ENCODE measurements at regions of chr19 and their contacts with region 1.

Region 1: GRCh38 chr19:55088543-55089341 is 13.1 kb downstream of the EPS8L1 start:
- DNase-seq: peak; percentile 77 to 84
- ATAC-seq: peak in 2 of 3 donors; percentile 51 to 60
- H3K4me3 ChIP-seq: no peak overlapping the region
- H3K4me3 Mint-ChIP-seq: peak overlapping the region; percentile 89
- H3K27ac ChIP-seq: no peak overlapping the region
- H3K27ac Mint-ChIP-seq: peak overlapping the region; percentile 46 to 81
- H3K4me1 ChIP-seq: peaks cover 25% of the 10 kb centered on the region
- H3K4me1 Mint-ChIP-seq: peaks cover 20 to 31% of the 10 kb centered on the region in 2 donors
- H3K27me3 ChIP-seq: peaks cover 21% of the 10 kb centered on the region
- H3K27me3 Mint-ChIP-seq: peaks cover 20 to 34% of the 10 kb centered on the region in 2 donors
- CTCF ChIP-seq: peak; percentile 86

Region 2: DNA sequence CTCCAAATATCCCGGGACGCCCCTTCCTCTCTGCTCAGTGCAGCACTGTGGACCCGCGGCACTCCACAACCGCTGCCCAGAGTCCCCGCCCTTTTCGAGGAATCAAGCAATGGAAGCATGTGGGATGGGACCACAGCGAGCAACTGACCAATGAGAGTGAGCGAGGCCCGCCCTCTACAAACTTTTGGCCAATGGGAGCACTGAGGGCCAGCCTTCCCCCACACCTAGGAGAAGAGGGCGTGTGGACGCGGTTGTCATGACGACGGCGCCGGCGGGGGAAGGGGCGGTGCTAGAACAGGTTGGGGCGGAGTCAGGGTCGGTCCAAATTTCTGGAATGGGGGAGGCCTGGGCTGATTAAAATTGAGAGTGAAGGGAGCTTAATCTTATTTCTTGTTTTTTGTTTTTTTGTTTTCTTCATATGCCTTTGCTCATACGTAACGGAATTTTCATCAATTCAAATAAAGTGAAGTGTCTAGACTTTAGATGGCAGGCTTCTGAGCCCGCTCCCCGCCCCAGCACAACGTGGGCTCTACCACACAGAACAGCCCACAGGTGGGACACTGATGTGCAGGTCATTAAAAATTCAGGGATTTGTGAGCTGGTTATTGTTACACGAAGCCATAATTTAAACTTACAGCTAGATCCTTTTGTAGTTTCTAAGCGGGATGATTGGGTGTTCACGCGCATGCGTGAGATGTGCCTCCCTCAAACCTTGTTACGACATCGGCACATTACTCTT is 78.0 kb after region 1 on chr19 and contains the start of gene DNAAF3:
- intact Hi-C with region 1: loop called (anchors 10 kb)
- DNase-seq: peak; percentile 45 to 80
- ATAC-seq: peak; percentile 83 to 89 (median 85)
- H3K4me3 ChIP-seq: no peak within 1 kb of the TSS
- H3K4me3 Mint-ChIP-seq: peak within 1 kb of the TSS; percentile 47
- H3K27ac ChIP-seq: no peak within 1 kb of the TSS
- H3K27ac Mint-ChIP-seq: peak within 1 kb of the TSS; percentile 16 to 83
- H3K4me1 ChIP-seq: peaks cover 16% of the 10 kb centered on the region
- H3K4me1 Mint-ChIP-seq: peaks cover 13 to 14% of the 10 kb centered on the region in 2 donors
- H3K27me3 ChIP-seq: peaks cover 31% of the 10 kb centered on the region
- H3K27me3 Mint-ChIP-seq: peaks cover 55 to 64% of the 10 kb centered on the region in 2 donors
- CTCF ChIP-seq: no peak
- total RNA-seq, gene DNAAF3: not detected

Region 3: DNA sequence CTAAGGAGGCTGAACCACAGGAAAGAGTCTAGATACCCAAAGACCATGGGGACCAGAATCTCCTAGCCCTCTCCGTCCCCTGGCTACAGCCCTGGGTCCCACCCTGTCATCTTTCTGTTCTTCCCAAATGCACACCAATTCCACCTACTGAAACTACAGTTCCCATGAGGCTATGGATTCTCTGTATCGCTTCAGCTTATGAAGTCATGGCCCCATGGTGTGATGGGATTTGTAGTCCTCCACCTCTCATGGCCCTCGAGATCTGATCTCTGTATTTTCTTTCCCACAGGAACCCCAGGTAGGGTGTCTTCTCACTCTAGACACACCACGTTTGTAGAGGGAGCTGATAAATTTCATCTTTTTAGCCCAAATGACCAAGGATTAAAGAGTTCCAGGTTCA is 108.8 kb after region 1 on chr19:
- intact Hi-C with region 1: no loop called
- DNase-seq: peak in 1 of 2 donors; percentile 30
- ATAC-seq: peak in 1 of 3 donors; percentile 55
- H3K4me3 ChIP-seq: no peak overlapping the region
- H3K4me3 Mint-ChIP-seq: no peak overlapping the region
- H3K27ac ChIP-seq: no peak overlapping the region
- H3K27ac Mint-ChIP-seq: no peak overlapping the region
- H3K4me1 ChIP-seq: no peaks in the 10 kb centered on the region
- H3K4me1 Mint-ChIP-seq: no peaks in the 10 kb centered on the region
- H3K27me3 ChIP-seq: no peaks in the 10 kb centered on the region
- H3K27me3 Mint-ChIP-seq: peaks cover 0 to 15% of the 10 kb centered on the region in 2 donors
- CTCF ChIP-seq: no peak

Region 4: DNA sequence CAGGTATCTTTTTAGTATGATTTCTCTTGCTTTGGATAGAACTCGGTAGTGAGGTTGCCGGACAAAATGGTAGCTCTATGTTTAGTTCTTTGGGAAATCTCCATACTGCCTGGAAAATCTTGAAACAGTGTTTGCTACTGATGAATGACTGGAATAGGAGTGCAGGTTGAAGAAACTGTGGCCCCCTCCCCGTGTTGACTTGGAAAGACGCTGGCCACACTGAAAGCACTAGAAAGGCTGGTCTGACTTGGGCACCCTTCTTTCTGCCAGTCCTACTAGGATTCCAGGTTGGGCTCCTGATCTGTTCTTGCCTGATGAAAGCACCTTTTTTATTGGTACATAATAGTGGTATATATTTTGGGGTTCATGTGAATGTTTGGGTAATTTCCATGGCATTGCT is 793.9 kb after region 1 on chr19:
- intact Hi-C with region 1: no loop called
- DNase-seq: no peak
- ATAC-seq: no peak
- H3K4me3 ChIP-seq: no peak overlapping the region
- H3K4me3 Mint-ChIP-seq: no peak overlapping the region
- H3K27ac ChIP-seq: no peak overlapping the region
- H3K27ac Mint-ChIP-seq: no peak overlapping the region
- H3K4me1 ChIP-seq: no peaks in the 10 kb centered on the region
- H3K4me1 Mint-ChIP-seq: no peaks in the 10 kb centered on the region
- H3K27me3 ChIP-seq: no peaks in the 10 kb centered on the region
- H3K27me3 Mint-ChIP-seq: peaks cover 0 to 1% of the 10 kb centered on the region in 2 donors
- CTCF ChIP-seq: no peak